ENCODE measurements at regions of chr17 and their contacts with region 1.

Region 1: GRCh38 chr17:794876-795275 is 12.7 kb downstream of the MRM3 start:
- DNase-seq: peak; percentile 59
- ATAC-seq: peak; percentile 88
- H3K4me3 Mint-ChIP-seq: no peak overlapping the region
- H3K27ac Mint-ChIP-seq: no peak overlapping the region
- H3K4me1 Mint-ChIP-seq: no peaks in the 10 kb centered on the region
- H3K27me3 Mint-ChIP-seq: no peaks in the 10 kb centered on the region
- CTCF ChIP-seq: peak; percentile 84

Region 2: GRCh38 chr17:499951-500461 is 294.9 kb before region 1 on chr17:
- CTCF ChIA-PET with region 1: no interaction called
- POLR2A ChIA-PET with region 1: no interaction called
- intact Hi-C with region 1: no loop called
- DNase-seq: no peak
- ATAC-seq: peak; percentile 14
- H3K4me3 Mint-ChIP-seq: no peak overlapping the region
- H3K27ac Mint-ChIP-seq: no peak overlapping the region
- H3K4me1 Mint-ChIP-seq: peaks cover 31% of the 10 kb centered on the region
- H3K27me3 Mint-ChIP-seq: peaks cover 6% of the 10 kb centered on the region
- CTCF ChIP-seq: no peak

Region 3: GRCh38 chr17:705863-706262 is 89.0 kb before region 1 on chr17:
- CTCF ChIA-PET with region 1: no interaction called
- POLR2A ChIA-PET with region 1: no interaction called
- intact Hi-C with region 1: no loop called
- DNase-seq: no peak
- ATAC-seq: no peak
- H3K4me3 Mint-ChIP-seq: no peak overlapping the region
- H3K27ac Mint-ChIP-seq: no peak overlapping the region
- H3K4me1 Mint-ChIP-seq: peaks cover 19% of the 10 kb centered on the region
- H3K27me3 Mint-ChIP-seq: no peaks in the 10 kb centered on the region
- CTCF ChIP-seq: no peak

Region 4: DNA sequence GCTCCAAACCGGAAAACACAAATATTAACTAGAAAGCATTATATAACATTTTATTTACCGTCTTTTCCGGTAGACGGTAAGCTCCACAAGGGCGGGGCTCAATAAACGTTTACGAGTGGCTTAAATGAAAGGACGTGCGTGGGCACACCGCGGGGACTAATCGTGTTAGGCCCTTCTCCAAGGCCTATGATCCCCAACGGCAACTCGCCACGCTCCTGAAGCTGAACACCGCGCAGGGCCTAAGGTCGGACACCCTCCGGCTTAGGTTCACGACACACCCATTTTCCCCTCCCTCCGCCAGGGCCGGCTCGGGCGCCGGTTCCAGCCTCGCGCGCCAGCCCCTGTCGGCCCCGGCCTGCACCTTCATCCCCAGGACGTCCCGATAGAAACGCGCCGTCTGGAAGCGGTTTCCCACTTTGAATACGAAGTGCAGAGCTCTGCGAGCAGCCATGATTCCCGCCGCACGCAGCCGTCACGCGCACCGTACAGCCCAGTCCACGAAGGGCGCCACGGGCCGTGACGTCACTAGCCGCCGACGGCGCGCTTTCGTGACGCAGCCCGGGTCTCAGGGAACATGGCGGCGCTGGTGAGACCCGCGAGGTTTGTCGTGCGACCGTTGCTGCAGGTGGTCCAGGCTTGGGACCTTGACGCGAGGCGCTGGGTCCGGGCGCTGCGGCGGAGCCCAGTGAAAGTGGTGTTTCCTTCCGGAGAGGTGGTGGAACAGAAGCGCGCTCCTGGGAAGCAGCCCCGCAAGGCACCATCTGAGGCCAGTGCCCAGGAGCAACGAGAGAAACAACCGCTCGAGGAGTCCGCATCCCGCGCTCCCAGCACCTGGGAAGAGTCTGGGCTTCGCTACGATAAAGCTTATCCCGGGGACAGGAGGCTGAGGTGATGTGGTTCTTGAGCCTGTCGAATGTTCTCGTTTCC is 12.8 kb before region 1 on chr17 and contains the starts of genes GLOD4 and MRM3:
- CTCF ChIA-PET with region 1: interaction called, 7 read pairs
- POLR2A ChIA-PET with region 1: interaction called, 10 read pairs
- intact Hi-C with region 1: no loop called
- DNase-seq: peak; percentile 96
- ATAC-seq: peak; percentile 95
- H3K4me3 Mint-ChIP-seq: peak within 1 kb of the TSS; percentile 89
- H3K27ac Mint-ChIP-seq: peak within 1 kb of the TSS; percentile 96
- H3K4me1 Mint-ChIP-seq: peaks cover 32% of the 10 kb centered on the region
- H3K27me3 Mint-ChIP-seq: no peaks in the 10 kb centered on the region
- CTCF ChIP-seq: peak; percentile 15
- total RNA-seq, gene GLOD4: 47.3 to 55.2 TPM
- total RNA-seq, gene MRM3: 35.5 to 36.2 TPM

Region 5: DNA sequence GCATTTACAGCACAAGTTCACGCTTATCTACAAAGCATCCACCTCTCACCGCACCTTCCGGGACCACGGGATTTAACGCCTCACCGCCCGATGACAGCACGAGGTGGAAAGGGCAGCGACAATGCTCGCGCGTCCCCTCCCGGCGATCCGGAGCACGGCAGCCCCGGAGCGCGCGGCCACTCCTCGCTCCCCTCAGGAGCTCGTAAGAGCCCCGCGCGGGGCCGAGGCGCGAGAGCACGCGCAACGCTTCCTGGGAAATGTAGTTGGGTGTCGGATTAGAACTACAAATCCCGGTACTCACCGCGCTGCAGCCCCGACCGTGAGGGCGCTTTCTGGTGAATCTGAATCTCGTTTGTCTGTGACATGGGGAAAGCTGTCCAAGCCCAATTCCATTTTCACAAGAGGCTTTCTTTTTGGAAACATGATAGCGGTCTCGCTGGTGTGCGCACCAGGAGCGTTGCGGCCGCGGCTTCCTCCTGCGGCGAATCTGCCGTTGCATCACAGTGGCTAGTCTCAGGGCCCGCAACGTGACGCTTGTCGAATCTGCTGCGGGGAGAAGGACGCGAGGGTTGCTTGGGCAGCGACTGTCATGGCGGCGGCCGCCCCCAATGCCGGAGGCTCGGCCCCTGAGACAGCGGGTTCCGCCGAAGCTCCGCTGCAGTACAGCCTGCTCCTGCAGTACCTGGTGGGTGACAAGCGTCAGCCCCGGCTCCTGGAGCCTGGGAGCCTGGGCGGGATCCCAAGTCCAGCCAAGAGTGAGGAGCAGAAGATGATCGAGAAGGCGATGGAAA is 201.9 kb after region 1 on chr17 and contains the start of gene TIMM22:
- CTCF ChIA-PET with region 1: interaction called, 17 read pairs
- POLR2A ChIA-PET with region 1: no interaction called
- intact Hi-C with region 1: no loop called
- DNase-seq: peak; percentile 95
- ATAC-seq: peak; percentile 96
- H3K4me3 Mint-ChIP-seq: peak within 1 kb of the TSS; percentile 87
- H3K27ac Mint-ChIP-seq: peak within 1 kb of the TSS; percentile 99
- H3K4me1 Mint-ChIP-seq: peaks cover 24% of the 10 kb centered on the region
- H3K27me3 Mint-ChIP-seq: no peaks in the 10 kb centered on the region
- CTCF ChIP-seq: peak; percentile 94
- total RNA-seq, gene TIMM22: 8.8 to 10.2 TPM

Measured in activated CD8-positive, alpha-beta T cell treated with anti-CD3 and anti-CD28 coated beads for 36 hours (primary cell).